ENCODE measurements at regions of chr10 and their contacts with region 1.

Region 1: DNA sequence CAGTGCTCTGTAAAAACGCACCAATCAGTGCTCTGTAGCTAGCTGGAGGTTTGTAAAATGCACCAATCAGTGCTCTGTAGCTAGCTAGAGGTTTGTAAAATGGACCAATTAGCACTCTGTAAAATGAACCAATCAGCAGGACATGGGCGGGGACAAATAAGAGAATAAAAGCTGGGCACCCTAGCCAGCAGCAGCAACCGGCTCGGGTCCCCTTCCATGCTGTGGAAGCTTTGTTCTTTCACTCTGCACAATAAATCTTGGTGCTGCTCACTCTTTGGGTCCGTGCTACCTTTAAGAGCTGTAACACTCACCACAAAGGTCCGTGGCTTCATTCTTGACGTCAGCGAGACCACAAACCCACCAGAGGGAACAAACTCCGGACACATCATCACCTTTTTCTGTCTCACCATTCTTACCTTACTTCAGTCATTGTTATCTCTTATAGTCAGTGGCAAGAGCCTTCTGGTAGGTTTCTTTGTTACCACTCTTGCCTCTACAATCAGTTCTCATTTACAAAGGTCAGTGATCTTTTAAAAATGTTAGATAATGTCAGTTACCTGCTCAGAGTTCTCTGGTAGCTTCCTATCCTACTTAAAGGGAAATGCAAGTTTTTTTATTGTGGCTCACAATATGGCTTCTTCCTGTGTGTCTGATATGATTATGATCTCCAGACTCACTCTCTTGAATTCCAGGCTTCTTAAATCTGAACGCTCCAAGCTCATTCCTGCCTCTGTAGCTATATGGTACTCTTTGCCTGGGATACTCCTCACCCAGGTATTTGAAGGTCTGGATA is 4.5 kb downstream of the STAM start:
- DNase-seq: peak; percentile 57 to 67 (median 64)
- H3K4me3 ChIP-seq: peak overlapping the region in 4 of 7 experiments; percentile 6 to 48 (median 10)
- H3K27ac ChIP-seq: peak overlapping the region in 1 of 2 experiments; percentile 100
- H3K4me1 ChIP-seq: peaks cover 37 to 51% (median 40%) of the 10 kb centered on the region in 4 experiments
- H3K27me3 ChIP-seq: no peaks in the 10 kb centered on the region

Region 2: DNA sequence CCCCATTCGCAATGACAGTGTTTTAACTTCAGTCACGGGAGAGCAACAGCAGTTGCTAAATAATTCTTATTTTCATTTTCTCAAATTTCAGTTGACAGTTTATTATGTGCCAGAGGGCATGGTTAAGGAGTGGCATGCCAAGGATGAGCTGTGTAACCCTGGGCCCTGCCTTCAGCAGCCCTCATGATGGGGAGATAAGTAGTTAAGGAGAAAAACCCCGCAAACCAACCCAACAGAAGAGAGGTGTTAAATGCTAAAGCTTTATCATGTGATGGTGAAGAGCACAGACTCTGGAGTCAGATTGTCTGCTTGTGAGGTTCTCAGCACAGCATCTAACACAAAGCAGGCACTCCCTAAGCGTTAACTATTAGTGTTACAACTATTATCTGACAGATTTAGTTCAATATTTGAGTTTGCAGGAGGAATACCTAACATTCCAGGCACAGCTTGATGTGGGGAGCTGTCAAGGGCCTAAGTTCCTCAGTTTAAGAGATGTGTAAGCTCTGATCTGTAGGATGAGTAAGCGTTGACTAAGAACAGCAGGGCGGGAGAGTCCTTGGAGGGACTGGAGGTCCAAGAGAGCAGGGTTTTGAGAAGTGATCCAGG is 25.1 kb after region 1 on chr10:
- CTCF ChIA-PET with region 1: interaction called, 10 read pairs
- POLR2A ChIA-PET with region 1: interaction called, 3 read pairs
- DNase-seq: no peak
- H3K4me3 ChIP-seq: no peak overlapping the region
- H3K27ac ChIP-seq: no peak overlapping the region
- H3K4me1 ChIP-seq: peaks cover 2 to 34% (median 9%) of the 10 kb centered on the region in 4 experiments
- H3K27me3 ChIP-seq: no peaks in the 10 kb centered on the region

Region 3: GRCh38 chr10:17710181-17710580 is 61.7 kb after region 1 on chr10:
- CTCF ChIA-PET with region 1: interaction called, 11 read pairs
- POLR2A ChIA-PET with region 1: interaction called, 3 read pairs
- DNase-seq: no peak
- H3K4me3 ChIP-seq: no peak overlapping the region
- H3K27ac ChIP-seq: no peak overlapping the region
- H3K4me1 ChIP-seq: no peaks in the 10 kb centered on the region
- H3K27me3 ChIP-seq: no peaks in the 10 kb centered on the region